ENCODE measurements at regions of chr5 and their contacts with region 1.

Region 1: DNA sequence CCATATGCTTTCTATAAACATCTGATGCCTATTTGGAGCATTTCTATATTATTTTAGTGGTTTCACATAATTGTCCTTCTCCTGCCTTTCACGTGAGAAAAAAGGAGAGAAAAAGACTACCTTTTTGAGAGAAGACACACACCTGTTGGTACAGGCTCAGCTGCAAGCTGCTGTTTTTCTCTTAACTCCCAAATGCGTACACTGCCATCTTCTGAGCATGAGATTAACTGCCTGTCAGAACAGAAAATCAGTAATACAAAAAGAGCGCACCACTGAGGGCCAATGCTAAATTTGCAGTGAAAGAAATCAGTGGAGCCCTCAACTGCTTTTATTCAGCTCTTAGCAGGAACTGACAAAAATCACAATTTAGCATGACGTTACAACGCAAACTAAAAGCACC is 54.9 kb downstream of the WDR41 start:
- DNase-seq: no peak
- ATAC-seq: peak; percentile 33 to 59

Region 2: DNA sequence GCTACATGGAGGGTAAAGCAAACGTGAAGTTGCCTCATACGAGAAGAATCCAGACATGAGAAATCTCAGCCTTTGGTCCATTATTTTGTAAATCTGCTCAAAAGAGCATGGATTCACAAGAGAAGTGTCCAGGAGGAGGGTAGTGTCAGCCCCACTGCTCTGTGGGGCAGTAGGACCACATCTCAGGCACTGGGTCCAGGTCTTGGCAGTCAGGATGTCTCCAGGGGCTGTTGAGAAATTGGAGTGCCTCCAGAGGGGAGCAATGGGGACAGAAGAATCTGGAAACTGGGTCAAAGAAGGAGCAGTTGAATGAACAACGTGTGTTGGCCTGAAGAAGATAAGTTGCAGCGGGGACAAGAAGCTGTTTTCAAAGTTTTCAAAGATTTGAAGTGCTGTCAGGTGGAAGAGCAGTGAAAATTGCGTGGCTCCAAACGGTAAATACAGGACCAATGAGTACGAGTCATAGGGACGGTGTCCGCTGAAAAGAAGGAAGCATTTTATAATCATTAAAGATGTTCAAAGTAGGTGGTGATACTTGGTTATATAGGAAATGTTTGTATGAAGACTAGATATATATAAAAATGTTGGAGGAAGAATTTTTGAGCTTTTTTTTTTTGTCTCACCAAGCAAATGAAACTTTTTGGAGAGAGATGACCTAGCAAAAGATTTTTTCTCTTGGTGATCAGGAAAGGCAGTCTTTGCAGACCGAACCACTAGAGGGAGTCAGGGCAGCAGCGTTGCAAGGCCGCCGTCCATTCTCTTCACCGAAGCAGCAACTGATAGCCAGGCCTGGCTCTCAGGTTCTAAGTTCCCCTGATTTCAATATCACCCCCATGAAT is 293.0 kb before region 1 on chr5:
- intact Hi-C with region 1: loop called in 1 of 2 experiments (anchors 1 kb)
- DNase-seq: peak; percentile 72
- ATAC-seq: peak; percentile 80 to 87

Region 3: DNA sequence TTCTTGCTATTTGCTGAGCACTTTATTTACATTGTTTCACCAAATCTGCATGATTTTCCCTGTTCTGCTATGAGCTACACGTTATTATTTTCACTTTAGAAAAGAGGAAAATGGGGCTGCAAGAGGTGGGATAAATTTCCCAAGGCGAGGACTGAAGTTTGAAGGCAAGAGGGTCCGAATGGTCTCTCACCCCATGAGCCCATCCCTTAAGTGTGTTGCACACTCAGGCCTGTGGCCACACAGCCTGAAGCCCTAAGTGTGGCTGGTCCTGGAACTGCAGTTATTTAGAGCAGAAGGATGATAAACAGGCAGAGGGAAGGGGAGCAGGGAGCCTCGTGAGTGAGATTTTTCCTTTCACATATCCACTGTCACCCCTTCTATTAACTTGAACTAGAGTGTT is 218.9 kb before region 1 on chr5:
- intact Hi-C with region 1: no loop called
- DNase-seq: no peak
- ATAC-seq: peak in 1 of 2 donors; percentile 33

Region 4: GRCh38 chr5:77369566-77369965 is 67.6 kb before region 1 on chr5:
- intact Hi-C with region 1: no loop called
- DNase-seq: no peak
- ATAC-seq: no peak

Region 5: GRCh38 chr5:77935506-77936364 is 498.5 kb after region 1 on chr5:
- intact Hi-C with region 1: no loop called
- DNase-seq: no peak
- ATAC-seq: no peak

Measured in left cardiac atrium (tissue), 4 donors.